GM10248 (cell line): ENCODE measurements at regions of chr11 and their contacts with region 1.

Region 1: DNA sequence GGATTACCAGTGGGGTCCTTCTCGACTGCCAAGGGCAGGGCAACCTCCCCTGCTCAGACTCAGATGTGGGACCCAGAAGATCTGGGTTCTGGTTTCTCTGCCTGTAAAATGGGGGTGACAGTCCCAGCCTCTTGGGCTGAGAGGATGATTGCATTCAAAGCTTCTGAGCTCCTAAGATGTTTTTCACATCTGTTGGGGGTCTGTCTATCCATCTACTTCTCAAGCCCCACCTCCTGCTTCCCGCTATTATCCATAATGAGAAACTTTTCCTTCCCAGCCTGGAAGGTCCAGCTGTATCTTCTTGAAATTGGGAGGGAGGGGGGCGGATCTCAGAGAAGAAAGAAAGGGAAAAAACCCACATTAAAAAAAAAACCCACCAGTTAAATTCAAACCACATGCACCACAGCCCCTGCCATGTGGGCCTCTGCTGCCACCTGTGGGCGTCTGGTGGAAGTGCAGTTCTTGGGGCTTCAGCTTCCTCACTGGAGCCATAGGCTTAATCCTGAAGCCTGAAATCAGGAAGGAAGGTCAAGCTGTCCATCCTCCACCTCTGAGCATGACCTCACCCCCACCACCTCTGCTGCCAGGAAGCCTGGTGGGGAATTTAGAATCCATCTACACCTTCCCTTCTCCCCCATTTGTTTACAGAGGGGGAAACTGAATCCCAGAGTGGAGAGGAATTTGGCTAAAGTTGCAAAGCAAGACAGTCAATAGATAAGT is 27.3 kb downstream of the ARHGEF17 start:
- DNase-seq: peak; percentile 84
- CTCF ChIP-seq: peak; percentile 99

Region 2: GRCh38 chr11:73242251-73243079 is 92.9 kb before region 1 on chr11:
- CTCF ChIA-PET with region 1: interaction called, 17 read pairs
- POLR2A ChIA-PET with region 1: no interaction called
- DNase-seq: peak; percentile 88
- CTCF ChIP-seq: peak; percentile 86

Region 3: DNA sequence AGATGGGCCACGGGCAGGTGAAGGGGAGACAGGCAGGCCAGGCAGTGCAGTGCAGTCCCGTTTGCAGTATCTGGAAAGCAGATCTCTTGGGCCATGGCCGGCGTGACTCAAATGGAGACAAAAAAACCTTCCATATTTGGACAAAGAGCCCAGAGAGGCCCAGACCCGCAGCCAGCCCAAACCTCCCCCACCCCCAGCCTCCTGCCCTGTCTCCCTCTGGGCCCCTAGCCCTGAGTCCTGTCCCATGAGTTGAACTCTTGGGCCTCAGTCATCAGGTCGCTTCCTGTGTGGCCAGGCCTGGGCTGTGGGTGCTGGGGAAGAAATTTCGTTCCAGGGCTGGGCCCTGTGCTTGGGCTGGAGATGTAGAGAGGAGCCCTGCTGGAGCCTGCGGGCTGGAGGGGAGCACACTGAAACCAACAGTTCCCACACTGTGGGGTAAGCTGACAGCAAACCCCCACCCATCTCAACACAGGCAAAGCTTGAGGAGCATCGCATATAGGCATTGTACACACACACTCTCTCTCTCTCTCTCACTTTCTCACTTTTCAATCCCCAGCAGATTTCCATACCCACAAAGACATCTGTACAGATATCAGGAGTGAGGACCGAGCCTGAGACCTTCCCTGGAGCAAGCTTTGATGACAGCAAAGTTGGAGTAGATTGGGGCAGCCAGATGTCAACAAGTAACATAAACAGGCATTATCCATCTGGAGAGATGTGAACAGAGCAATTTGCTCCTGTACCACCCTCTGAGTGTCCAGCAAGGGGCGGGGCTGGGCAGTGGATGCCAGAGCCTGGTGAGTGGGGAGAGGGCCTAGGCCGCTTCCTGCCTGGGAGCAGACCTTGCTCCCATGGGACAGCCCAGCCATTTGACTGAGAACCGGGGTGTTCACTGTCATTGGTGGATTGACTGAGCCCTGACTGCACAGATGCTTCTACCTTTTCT is 10.1 kb before region 1 on chr11:
- CTCF ChIA-PET with region 1: interaction called, 132 read pairs
- POLR2A ChIA-PET with region 1: no interaction called
- DNase-seq: peak; percentile 88
- CTCF ChIP-seq: no peak

Region 4: GRCh38 chr11:73384872-73385689 is 49.7 kb after region 1 on chr11:
- CTCF ChIA-PET with region 1: interaction called, 11 read pairs
- POLR2A ChIA-PET with region 1: no interaction called
- DNase-seq: peak; percentile 83
- CTCF ChIP-seq: no peak

Region 5: DNA sequence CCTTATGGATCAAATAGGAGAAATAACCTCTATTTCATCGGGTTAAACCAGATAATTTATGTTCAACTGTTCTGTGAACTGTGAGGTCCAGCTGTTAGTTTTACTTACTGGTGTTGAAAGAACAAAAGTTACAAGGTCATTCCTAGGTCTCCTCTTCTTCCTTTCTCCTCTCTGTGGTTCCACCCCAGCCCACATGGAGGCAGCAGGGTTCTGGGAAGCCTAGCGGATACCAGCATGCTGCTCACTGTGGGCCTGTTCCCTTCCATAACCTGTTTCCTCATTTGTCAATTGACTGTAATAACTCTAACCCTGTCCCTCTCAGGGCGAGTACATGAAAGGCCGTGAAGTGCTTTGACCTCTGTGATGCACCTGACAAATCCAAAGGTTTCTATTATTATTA is 68.7 kb after region 1 on chr11:
- CTCF ChIA-PET with region 1: interaction called, 11 read pairs
- POLR2A ChIA-PET with region 1: no interaction called
- DNase-seq: peak; percentile 18
- CTCF ChIP-seq: peak; percentile 21

Region 6: DNA sequence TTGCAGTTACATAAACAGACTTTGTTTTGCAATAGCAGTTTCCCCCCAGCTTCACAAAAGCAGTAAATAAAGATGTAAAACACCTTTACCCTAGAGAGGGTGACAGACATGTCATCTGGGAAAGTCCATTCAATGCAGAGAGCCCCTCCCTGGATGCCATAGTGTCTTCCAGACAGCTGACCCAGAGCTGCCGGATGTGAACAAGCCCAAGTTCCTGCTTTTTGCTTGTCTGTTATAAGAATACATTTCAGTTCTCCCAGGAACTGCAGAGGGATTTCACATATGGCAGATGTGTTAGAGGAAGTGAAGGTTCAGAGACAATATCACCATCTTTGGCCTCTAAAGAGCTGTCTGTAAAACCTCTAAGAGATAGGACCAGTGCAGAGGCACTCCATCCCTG is 89.7 kb after region 1 on chr11:
- CTCF ChIA-PET with region 1: no interaction called
- POLR2A ChIA-PET with region 1: no interaction called
- DNase-seq: no peak
- CTCF ChIP-seq: no peak